Lower leg skin (tissue), 4 donors: ENCODE measurements at regions of chr9 and their contacts with region 1.

Region 1: GRCh38 chr9:125106285-125106893 is 36.9 kb downstream of the SCAI start:
- DNase-seq: no peak
- H3K4me3 ChIP-seq: no peak overlapping the region
- CTCF ChIP-seq: no peak
- POLR2A ChIP-seq: no peak

Region 2: DNA sequence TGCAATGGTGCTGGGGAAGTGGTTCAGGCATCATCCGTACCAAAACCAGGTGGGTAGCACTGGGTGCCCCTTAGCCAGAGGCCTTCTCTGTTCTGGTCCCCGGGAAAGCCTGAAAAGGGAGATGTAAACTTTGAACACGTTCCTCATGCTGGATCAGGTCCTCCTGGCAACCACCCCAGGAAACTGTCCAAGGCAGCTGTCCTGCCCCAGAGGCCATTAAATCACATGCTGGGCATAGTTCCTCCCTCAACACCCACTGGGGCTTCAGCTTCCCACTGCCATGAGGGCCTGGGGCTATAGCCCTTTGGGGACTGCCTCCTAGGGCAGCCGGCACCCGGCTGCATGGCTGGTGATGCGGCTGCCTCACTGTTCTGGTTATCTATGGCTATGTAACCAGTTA is 991.3 kb after region 1 on chr9:
- intact Hi-C with region 1: loop called (anchors 5 kb)
- DNase-seq: no peak
- H3K4me3 ChIP-seq: no peak overlapping the region
- CTCF ChIP-seq: no peak
- POLR2A ChIP-seq: no peak